Heart left ventricle (tissue), 16 donors: ENCODE measurements at regions of chr4 and their contacts with region 1.

Region 1: DNA sequence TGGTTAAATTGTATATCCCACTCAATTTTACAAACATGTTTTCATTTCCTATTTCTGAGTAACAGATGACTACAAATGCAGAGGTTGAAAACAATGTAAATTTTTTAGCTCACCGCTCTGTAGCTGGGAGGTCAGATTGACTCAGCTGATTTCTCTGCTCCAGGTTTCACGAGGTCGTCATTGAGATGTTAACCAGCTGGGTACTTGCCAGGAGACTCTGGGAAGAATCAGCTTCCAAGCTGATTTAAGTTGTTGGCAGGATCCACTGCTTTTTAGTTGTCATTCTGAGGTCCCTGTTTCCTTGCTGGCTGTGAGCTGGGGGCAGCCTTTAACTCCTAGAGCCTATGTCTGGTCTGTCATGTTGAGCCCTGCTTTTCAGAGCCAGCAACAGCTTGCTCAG is 864.3 kb upstream of the AGA start:
- DNase-seq: no peak
- ATAC-seq: no peak
- H3K4me3 ChIP-seq: no peak overlapping the region
- H3K27ac ChIP-seq: no peak overlapping the region
- H3K4me1 ChIP-seq: no peaks in the 10 kb centered on the region
- H3K27me3 ChIP-seq: no peaks in the 10 kb centered on the region
- CTCF ChIP-seq: no peak
- POLR2A ChIP-seq: no peak

Region 2: GRCh38 chr4:177016541-177017141 is 1289.9 kb before region 1 on chr4:
- intact Hi-C with region 1: no loop called
- DNase-seq: no peak
- ATAC-seq: no peak
- H3K4me3 ChIP-seq: no peak overlapping the region
- H3K27ac ChIP-seq: no peak overlapping the region
- H3K4me1 ChIP-seq: no peaks in the 10 kb centered on the region
- H3K27me3 ChIP-seq: no peaks in the 10 kb centered on the region
- CTCF ChIP-seq: no peak
- POLR2A ChIP-seq: no peak

Region 3: GRCh38 chr4:177555007-177555574 is 751.5 kb before region 1 on chr4:
- intact Hi-C with region 1: loop called in 1 of 10 experiments (anchors 10 kb)
- DNase-seq: no peak
- ATAC-seq: no peak
- H3K4me3 ChIP-seq: no peak overlapping the region
- H3K27ac ChIP-seq: no peak overlapping the region
- H3K4me1 ChIP-seq: no peaks in the 10 kb centered on the region
- H3K27me3 ChIP-seq: no peaks in the 10 kb centered on the region
- CTCF ChIP-seq: peak in 11 of 12 donors; percentile 18 to 61 (median 48)
- POLR2A ChIP-seq: no peak